B cell (primary cell): ENCODE measurements at regions of chr3 and their contacts with region 1.

Region 1: DNA sequence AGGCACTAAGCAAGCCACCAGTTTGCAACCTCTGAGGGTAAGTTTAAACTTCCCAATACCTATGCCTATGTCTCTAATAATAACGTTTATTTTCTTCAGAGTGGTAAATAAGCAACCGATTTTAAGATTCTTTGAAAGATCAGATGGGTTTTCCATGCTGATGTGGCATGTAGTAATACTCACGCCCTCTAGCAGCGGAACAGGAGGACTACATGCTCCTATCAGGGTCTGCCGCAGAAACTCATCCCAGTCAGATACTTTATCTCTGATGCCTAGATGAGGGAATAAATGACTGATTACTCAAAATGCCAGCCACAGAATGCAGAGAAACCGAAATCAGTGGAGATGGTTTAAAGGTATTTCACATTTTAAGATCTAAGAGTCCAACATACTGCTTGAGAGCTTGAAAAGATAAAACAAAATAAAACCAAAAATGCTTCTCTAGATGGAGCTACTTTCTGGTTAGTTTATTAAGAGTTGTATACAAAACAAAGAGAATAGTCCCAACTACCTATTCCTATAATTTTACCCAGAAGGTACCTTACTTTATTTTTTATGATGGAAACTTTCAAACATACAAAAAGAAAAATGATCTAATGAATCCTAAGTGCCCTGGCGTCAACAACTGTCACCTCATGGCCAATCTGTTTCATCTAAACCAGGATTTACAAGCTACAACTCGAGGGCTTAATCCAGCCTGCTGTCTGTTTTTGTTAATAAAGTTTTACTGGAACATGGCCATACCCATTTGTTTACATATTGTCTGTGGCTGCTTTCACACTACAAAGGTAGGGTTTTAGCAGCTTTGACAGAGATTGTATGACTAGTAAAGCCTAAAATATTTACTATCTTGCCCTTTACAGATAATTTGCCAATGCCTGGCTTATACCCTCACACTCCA is 37.5 kb upstream of the STIMATE start:
- DNase-seq: peak; percentile 69
- ATAC-seq: peak; percentile 87
- H3K4me3 ChIP-seq: no peak overlapping the region
- H3K4me3 Mint-ChIP-seq: no peak overlapping the region
- H3K27ac ChIP-seq: peak overlapping the region in 1 of 2 donors; percentile 50
- H3K27ac Mint-ChIP-seq: peak overlapping the region; percentile 53
- H3K4me1 ChIP-seq: peaks cover 19 to 20% of the 10 kb centered on the region in 2 donors
- H3K4me1 Mint-ChIP-seq: peaks cover 21% of the 10 kb centered on the region
- H3K27me3 ChIP-seq: no peaks in the 10 kb centered on the region
- H3K27me3 Mint-ChIP-seq: no peaks in the 10 kb centered on the region
- CTCF ChIP-seq: peak; percentile 83

Region 2: DNA sequence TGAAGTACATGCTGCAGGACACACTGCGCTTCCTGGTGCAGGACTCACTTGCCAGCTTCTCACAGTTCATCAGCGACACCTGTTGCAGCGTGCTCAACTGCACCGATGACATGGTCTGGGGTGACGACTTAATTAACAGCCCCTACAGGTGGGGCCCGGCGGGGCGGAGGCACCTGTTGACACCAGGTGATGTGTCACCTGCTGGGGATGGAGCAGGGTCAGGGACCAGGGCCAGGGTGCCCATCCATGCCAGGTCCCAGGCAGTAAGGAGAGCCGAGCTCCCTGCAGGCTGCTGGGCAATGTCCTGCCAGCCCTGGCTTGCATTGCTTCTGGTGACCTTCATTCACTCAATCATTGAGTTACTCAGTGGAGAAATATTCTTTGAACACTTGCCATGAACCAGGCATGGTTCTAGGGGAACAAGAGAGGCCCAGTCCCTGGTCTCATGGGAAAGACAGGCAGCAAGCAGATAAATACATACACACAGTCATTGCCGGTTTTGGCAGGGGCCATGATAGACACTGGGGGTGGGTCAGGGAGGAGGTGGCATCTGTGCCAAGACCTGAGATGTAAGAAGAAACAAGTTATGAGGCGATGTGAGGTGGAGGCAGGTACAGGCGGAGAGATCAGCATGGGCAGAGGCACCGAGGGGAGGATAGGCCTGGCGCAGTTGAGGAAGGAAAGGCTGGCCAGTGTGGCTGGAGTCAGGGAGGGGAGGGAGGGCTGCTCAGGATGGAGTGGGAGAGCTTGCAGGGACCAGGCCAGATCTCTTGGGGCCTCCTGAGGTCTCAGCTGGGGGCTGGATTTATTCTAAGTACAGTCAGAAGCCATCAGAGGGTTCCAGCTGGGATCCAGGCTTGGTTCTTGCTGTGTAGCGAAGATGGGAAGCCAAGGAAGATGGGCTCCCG is 588.0 kb before region 1 on chr3:
- CTCF ChIA-PET with region 1: no interaction called
- POLR2A ChIA-PET with region 1: no interaction called
- intact Hi-C with region 1: no loop called
- DNase-seq: no peak
- ATAC-seq: no peak
- H3K4me3 ChIP-seq: no peak overlapping the region
- H3K4me3 Mint-ChIP-seq: no peak overlapping the region
- H3K27ac ChIP-seq: no peak overlapping the region
- H3K27ac Mint-ChIP-seq: no peak overlapping the region
- H3K4me1 ChIP-seq: no peaks in the 10 kb centered on the region
- H3K4me1 Mint-ChIP-seq: no peaks in the 10 kb centered on the region
- H3K27me3 ChIP-seq: no peaks in the 10 kb centered on the region
- H3K27me3 Mint-ChIP-seq: no peaks in the 10 kb centered on the region
- CTCF ChIP-seq: no peak

Region 3: GRCh38 chr3:52907497-52907896 is 27.4 kb before region 1 on chr3:
- CTCF ChIA-PET with region 1: interaction called, 10 read pairs
- POLR2A ChIA-PET with region 1: no interaction called
- intact Hi-C with region 1: no loop called
- DNase-seq: no peak
- ATAC-seq: no peak
- H3K4me3 ChIP-seq: no peak overlapping the region
- H3K4me3 Mint-ChIP-seq: no peak overlapping the region
- H3K27ac ChIP-seq: no peak overlapping the region
- H3K27ac Mint-ChIP-seq: no peak overlapping the region
- H3K4me1 ChIP-seq: no peaks in the 10 kb centered on the region
- H3K4me1 Mint-ChIP-seq: no peaks in the 10 kb centered on the region
- H3K27me3 ChIP-seq: no peaks in the 10 kb centered on the region
- H3K27me3 Mint-ChIP-seq: no peaks in the 10 kb centered on the region
- CTCF ChIP-seq: peak; percentile 15